Activated B cell treated with CpG ODN at 0.5 μM for 24 hours (primary cell): ENCODE measurements at regions of chr9 and their contacts with region 1.

Region 1: DNA sequence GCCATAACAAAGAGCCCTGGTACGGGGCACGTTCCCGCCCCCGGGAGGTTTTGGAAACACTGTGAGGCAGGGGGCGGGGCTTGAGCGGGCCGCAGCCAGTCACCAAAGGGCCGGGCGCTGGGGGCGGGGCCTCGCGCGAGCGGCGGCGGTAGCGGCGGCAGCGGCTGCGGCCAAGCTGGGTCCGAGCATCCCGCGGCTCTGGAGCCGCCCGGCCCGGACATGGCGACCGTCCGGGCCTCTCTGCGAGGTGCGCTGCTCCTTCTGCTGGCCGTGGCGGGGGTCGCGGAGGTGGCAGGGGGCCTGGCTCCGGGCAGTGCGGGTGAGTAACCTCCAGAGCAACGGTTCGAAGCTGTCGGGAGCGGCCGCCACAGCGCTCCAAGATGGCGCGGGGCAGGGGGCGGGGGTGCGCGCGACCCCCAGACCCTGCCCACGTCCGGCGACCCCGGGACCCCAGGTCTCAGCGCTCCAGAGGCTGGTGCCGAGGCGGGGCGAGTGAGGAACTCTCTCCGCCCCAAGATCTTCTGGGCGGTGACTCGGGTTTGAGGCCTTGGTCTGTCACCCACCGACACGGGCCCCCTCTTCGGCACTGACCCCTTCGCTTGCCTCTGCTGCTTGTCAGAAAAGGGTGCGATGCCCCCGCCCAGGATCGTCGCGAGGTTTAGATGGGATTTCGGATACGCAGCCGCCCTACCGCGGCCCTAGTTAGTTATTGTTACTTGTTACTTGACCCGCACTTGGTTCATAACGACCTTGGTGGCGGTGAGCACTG is at the start of gene RECK:
- DNase-seq: peak; percentile 87
- ATAC-seq: peak; percentile 97
- H3K4me3 Mint-ChIP-seq: peak within 1 kb of the TSS; percentile 92
- H3K27ac Mint-ChIP-seq: no peak within 1 kb of the TSS
- H3K4me1 Mint-ChIP-seq: peaks cover 37% of the 10 kb centered on the region
- H3K27me3 Mint-ChIP-seq: peaks cover 4% of the 10 kb centered on the region
- CTCF ChIP-seq: no peak
- total RNA-seq, gene RECK: 4.2 and 5.0 TPM in 2 replicates

Region 2: GRCh38 chr9:35903049-35903448 is 133.9 kb before region 1 on chr9:
- CTCF ChIA-PET with region 1: no interaction called
- POLR2A ChIA-PET with region 1: no interaction called
- intact Hi-C with region 1: no loop called
- DNase-seq: no peak
- ATAC-seq: peak; percentile 49
- H3K4me3 Mint-ChIP-seq: no peak overlapping the region
- H3K27ac Mint-ChIP-seq: no peak overlapping the region
- H3K4me1 Mint-ChIP-seq: no peaks in the 10 kb centered on the region
- H3K27me3 Mint-ChIP-seq: peaks cover 17% of the 10 kb centered on the region
- CTCF ChIP-seq: peak; percentile 79

Region 3: GRCh38 chr9:36092509-36093215 is 55.7 kb after region 1 on chr9:
- CTCF ChIA-PET with region 1: no interaction called
- POLR2A ChIA-PET with region 1: interaction called, 4 read pairs
- intact Hi-C with region 1: loop called (anchors 5 kb)
- DNase-seq: no peak
- ATAC-seq: peak; percentile 98
- H3K4me3 Mint-ChIP-seq: peak overlapping the region; percentile 58
- H3K27ac Mint-ChIP-seq: peak overlapping the region; percentile 85
- H3K4me1 Mint-ChIP-seq: peaks cover 16% of the 10 kb centered on the region
- H3K27me3 Mint-ChIP-seq: no peaks in the 10 kb centered on the region
- CTCF ChIP-seq: no peak

Region 4: DNA sequence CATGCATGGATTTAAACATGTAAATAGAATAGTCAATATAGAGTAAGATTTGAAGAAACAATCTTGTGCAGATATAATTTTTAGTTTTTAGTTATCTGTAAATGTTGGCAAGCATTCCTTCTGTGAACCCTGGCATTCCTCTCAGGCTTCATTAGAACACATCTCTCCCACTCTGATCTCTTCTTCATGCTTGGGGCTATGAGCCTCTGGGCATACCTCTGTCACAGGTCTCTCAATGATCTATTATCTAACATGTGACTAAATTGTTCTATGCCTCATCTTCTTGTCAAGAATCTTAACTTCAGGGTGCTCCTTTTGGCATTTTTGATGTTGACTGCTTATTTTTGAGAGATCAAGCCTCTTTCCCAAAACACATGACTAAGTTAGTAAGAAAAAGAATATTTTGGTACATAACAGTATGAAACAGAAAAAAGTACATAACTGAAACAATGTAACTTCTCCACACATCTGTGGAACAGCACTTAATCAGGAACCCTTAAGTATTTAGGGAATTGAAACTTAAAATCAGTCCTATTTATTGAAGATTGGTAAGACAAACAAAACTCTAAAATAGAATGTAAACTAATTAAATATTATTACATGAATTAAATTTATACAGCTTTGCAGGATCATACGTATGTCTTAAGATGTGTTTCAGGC is 639.0 kb after region 1 on chr9:
- CTCF ChIA-PET with region 1: no interaction called
- POLR2A ChIA-PET with region 1: no interaction called
- intact Hi-C with region 1: no loop called
- DNase-seq: no peak
- ATAC-seq: no peak
- H3K4me3 Mint-ChIP-seq: no peak overlapping the region
- H3K27ac Mint-ChIP-seq: no peak overlapping the region
- H3K4me1 Mint-ChIP-seq: peaks cover 2% of the 10 kb centered on the region
- H3K27me3 Mint-ChIP-seq: no peaks in the 10 kb centered on the region
- CTCF ChIP-seq: no peak